ENCODE measurements at regions of chr12 and their contacts with region 1.

Region 1: DNA sequence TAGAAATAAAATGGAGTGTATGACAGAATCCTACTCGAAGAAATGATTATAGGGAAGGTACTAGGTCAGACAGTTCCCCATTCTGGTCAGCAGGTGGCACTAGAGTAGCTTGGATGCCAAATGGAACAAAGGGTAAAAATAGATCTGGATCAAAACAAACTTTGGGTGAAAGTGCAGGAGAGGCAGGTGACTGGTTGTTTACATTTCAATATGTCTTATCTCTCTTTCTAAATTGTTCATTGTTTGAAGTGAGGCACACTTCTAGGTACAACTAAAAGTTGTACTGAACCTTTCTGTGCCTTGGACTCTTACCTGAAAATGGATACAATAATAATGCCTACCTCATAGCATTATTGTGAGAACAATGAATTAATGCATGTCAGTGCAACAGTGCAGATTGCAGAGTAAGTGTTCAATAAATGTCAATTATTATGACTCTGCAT is 62.0 kb upstream of the OSBPL8 start:
- DNase-seq: peak; percentile 66 to 80 (median 70)
- ATAC-seq: peak; percentile 91
- H3K4me3 ChIP-seq: no peak overlapping the region
- H3K27ac ChIP-seq: no peak overlapping the region
- H3K4me1 ChIP-seq: no peaks in the 10 kb centered on the region
- H3K27me3 ChIP-seq: 0 out of 5 replicates have a peak, but pooled peaks cover 0 to 3% of the 10 kb centered on the region in 2 experiments
- CTCF ChIP-seq: peak; percentile 80 to 97 (median 85)
- EP300 ChIP-seq: no peak
- POLR2A ChIP-seq: no peak
- RAD21 ChIP-seq: peak; percentile 98

Region 2: GRCh38 chr12:76551482-76551888 is 70.1 kb before region 1 on chr12:
- CTCF ChIA-PET with region 1: no interaction called
- POLR2A ChIA-PET with region 1: no interaction called
- in situ Hi-C with region 1: no loop called
- intact Hi-C with region 1: no loop called
- DNase-seq: peak; percentile 23 to 80 (median 43)
- ATAC-seq: peak; percentile 80
- H3K4me3 ChIP-seq: no peak overlapping the region
- H3K27ac ChIP-seq: peak overlapping the region; percentile 26; the same call in 1 of the 3 replicates
- H3K4me1 ChIP-seq: peaks cover 11 to 49% of the 10 kb centered on the region in 2 experiments
- H3K27me3 ChIP-seq: no peaks in the 10 kb centered on the region
- CTCF ChIP-seq: no peak
- EP300 ChIP-seq: peak; percentile 69
- POLR2A ChIP-seq: no peak
- RAD21 ChIP-seq: no peak

Region 3: DNA sequence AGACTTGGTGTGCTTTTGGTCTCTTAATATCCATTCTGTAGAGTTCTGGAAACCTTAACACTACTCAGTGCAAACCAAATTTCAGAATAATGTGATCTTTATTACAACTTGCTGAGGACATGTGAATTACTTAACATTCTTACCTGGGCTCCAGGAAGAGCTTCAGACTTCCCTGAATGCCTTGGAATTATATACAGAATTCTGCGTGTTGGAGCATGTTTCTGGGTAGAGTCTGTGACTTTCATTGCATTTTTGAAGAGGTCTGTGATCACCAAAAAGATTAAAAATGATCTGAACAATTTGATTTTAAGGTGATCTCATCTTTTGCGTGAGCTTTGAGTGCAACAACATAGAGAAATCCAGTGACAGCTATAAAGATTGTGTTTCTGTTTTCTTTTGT is 177.8 kb after region 1 on chr12:
- CTCF ChIA-PET with region 1: interaction called, 3 read pairs
- POLR2A ChIA-PET with region 1: no interaction called
- in situ Hi-C with region 1: loop called (anchors 5 kb)
- intact Hi-C with region 1: no loop called
- DNase-seq: no peak
- ATAC-seq: no peak
- H3K4me3 ChIP-seq: no peak overlapping the region
- H3K27ac ChIP-seq: no peak overlapping the region
- H3K4me1 ChIP-seq: peaks cover 0 to under 1% of the 10 kb centered on the region in 2 experiments; a peak in 1 of 5 replicates
- H3K27me3 ChIP-seq: no peaks in the 10 kb centered on the region
- CTCF ChIP-seq: no peak
- EP300 ChIP-seq: no peak
- POLR2A ChIP-seq: no peak
- RAD21 ChIP-seq: no peak

Region 4: DNA sequence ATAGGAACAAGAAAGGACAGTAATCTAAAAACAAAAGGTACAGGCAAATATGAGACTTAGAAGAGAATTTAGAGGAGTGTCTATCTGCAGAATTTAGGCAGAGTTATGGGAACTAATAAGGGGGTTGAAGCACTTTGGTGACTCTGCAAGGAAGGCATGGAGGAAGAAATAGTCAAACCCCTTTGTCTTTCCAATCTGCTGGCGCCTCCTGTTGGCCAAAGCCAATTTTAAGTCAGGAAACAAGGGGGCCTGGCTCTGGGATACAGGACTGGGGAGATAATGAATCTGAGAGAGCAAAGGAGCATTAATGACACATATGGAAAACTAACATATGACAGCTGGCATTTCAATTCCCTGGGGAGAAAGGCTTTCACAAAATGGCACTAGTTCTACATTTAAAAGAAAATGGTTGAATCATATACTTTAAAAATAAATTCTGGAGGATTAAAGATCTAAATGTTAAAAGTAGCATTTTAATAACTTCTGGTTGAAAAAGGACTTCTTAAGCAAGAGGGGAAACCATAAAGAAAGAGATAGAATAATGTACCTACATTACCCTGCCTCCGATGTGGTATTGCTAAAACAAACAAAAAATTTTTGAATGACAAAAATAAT is 305.7 kb after region 1 on chr12:
- CTCF ChIA-PET with region 1: interaction called, 5 read pairs
- POLR2A ChIA-PET with region 1: no interaction called
- in situ Hi-C with region 1: no loop called
- intact Hi-C with region 1: loop called (anchors 1 kb)
- DNase-seq: peak; percentile 35 to 69 (median 48)
- ATAC-seq: peak; percentile 89
- H3K4me3 ChIP-seq: no peak overlapping the region
- H3K27ac ChIP-seq: no peak overlapping the region
- H3K4me1 ChIP-seq: no peaks in the 10 kb centered on the region
- H3K27me3 ChIP-seq: peaks cover 0 to 5% of the 10 kb centered on the region in 2 experiments; a peak in 3 of 5 replicates
- CTCF ChIP-seq: peak; percentile 52 to 74 (median 65)
- EP300 ChIP-seq: no peak
- POLR2A ChIP-seq: no peak
- RAD21 ChIP-seq: peak; percentile 48 to 85

Region 5: DNA sequence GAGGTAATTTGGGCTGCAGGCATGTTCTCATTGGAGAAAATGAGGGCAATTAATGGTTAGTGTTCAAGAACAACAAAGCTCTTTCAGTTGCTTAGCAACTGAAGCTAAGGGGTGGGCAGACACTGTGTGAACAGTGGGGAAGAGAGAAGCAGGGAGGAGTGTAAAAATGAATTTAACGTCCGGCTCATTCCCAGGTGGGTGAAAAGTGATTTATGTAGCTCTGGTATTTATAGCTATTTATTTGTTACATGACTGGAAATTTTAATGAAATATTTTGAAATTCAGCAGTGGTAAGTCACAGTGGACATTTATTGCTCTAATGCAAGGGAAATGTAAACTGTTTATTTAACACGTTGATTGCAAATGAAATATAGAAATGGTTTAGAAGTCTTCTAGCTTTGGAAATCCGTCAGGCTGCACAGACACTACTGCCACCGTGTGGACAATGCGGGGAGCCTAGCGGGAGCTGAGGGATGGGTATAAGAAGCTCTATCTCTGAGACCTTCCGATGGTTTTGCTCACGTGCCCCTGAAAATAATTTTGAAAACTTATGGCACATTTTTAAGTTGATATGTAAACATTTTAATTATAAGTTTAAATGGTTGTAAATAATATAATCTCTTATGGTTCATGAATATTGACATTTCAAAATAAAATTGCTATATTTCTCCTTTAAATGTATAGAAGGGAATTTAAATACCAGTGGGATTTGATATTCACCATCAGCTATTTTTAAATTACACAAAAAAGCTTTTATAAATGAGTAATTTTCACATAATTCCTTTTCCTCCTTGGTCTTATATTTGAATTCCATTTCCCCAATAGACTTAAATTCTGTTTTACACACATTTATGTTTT is 389.3 kb after region 1 on chr12:
- CTCF ChIA-PET with region 1: interaction called, 3 read pairs
- POLR2A ChIA-PET with region 1: no interaction called
- in situ Hi-C with region 1: loop called (anchors 10 kb)
- intact Hi-C with region 1: loop called (anchors 1 kb)
- DNase-seq: peak; percentile 70 to 81 (median 72)
- ATAC-seq: peak; percentile 96
- H3K4me3 ChIP-seq: no peak overlapping the region
- H3K27ac ChIP-seq: no peak overlapping the region
- H3K4me1 ChIP-seq: no peaks in the 10 kb centered on the region; a peak in 1 of 5 replicates
- H3K27me3 ChIP-seq: peaks cover 0 to 3% of the 10 kb centered on the region in 2 experiments; a peak in 2 of 5 replicates
- CTCF ChIP-seq: peak; percentile 84 to 92 (median 85)
- EP300 ChIP-seq: no peak
- POLR2A ChIP-seq: no peak
- RAD21 ChIP-seq: peak; percentile 62 to 76